Activated CD4-positive, alpha-beta T cell treated with anti-CD3 and anti-CD28 coated beads, Interleukin-2, amount 10 ng/mL, durations not matched to agents 24 days and 14 days (primary cell): ENCODE measurements at regions of chr2 and their contacts with region 1.

Region 1: DNA sequence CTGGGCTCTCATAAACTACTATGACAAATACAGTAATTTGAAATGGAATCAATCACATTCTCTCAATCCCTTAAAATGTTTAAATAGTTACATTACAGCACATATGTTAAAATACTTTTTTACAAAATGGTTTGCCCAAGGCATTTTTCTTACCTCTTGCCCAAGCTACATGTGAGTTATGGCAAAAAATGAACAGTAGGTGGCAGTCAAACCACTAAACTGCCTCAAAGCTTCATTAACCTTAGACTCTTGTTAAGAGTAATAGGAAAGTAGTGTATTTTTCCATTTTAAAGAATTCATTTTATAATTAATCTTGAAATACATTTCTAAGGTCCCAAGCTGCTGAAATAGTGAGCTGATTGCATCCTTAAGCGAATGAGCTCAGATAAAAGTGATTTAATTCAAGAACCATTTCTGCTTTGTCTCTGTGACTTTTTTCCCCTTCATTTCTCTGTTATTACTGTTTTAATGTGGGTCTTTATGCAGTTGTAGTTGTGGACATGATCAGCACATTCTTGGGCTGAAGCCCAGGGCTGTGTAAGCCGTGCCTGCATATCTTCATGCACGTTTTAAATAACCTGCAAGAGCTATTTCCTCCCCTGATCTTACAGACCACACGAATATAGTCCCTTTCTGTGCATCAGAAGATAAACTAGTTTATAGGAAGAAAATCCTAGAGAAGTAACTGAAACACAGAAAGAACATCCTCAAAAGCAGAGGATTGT is 311.8 kb downstream of the LNPK start:
- DNase-seq: peak; percentile 78
- H3K4me3 Mint-ChIP-seq: no peak overlapping the region
- H3K27ac Mint-ChIP-seq: no peak overlapping the region
- H3K4me1 Mint-ChIP-seq: no peaks in the 10 kb centered on the region
- H3K27me3 Mint-ChIP-seq: peaks cover 14% of the 10 kb centered on the region

Region 2: GRCh38 chr2:175778161-175778560 is 87.9 kb after region 1 on chr2:
- intact Hi-C with region 1: no loop called
- DNase-seq: no peak
- H3K4me3 Mint-ChIP-seq: no peak overlapping the region
- H3K27ac Mint-ChIP-seq: no peak overlapping the region
- H3K4me1 Mint-ChIP-seq: no peaks in the 10 kb centered on the region
- H3K27me3 Mint-ChIP-seq: no peaks in the 10 kb centered on the region

Region 3: DNA sequence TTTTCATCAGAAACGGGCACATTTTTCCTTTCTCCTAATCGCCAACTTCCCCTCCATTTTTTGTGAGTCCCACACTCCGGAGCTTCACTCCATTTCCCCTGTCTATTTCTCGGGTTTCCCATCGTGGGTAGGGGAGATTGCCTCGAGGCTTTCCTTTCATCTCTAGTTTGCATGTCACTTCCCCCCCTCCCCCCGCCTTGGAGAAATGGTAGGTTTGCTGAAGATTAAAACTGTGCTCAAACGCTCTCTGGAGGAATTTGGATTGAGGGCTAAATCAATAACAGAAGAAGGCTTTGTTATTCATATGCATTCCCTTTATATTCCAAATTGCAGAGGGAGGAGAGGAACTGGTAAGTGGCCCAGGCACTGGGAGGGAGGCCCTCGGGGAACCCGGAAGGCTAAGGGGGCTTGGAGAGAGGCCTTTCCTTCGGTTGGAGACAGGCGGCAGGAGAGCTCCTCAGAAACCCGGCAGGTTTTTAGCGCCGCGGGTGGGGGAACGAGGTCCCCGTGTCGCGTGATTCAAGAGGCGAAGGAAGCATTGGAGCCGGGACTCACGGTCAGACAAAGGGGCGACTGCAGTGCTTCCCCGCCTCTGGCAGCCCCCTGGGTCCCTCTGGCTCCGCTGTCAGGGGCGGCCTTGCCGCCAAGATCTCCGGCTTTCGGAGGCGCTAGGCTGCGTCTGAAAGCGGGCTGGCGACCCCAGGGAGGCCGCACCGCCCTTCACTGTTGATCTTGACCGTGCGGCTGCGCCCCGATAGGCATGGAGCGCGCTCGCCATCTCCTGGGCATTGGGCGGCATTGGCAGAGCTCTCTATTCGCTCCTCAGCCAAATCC is 406.9 kb after region 1 on chr2:
- intact Hi-C with region 1: loop called (anchors 1 kb)
- DNase-seq: peak; percentile 85
- H3K4me3 Mint-ChIP-seq: peak overlapping the region; percentile 81
- H3K27ac Mint-ChIP-seq: no peak overlapping the region
- H3K4me1 Mint-ChIP-seq: peaks cover 13% of the 10 kb centered on the region
- H3K27me3 Mint-ChIP-seq: peaks cover 83% of the 10 kb centered on the region

Region 4: GRCh38 chr2:176643646-176644045 is 953.4 kb after region 1 on chr2:
- intact Hi-C with region 1: loop called (anchors 5 kb)
- DNase-seq: no peak
- H3K4me3 Mint-ChIP-seq: no peak overlapping the region
- H3K27ac Mint-ChIP-seq: no peak overlapping the region
- H3K4me1 Mint-ChIP-seq: no peaks in the 10 kb centered on the region
- H3K27me3 Mint-ChIP-seq: peaks cover 68% of the 10 kb centered on the region